Astrocyte of the cerebellum (primary cell): ENCODE measurements at regions of chr14 and their contacts with region 1.

Region 1: DNA sequence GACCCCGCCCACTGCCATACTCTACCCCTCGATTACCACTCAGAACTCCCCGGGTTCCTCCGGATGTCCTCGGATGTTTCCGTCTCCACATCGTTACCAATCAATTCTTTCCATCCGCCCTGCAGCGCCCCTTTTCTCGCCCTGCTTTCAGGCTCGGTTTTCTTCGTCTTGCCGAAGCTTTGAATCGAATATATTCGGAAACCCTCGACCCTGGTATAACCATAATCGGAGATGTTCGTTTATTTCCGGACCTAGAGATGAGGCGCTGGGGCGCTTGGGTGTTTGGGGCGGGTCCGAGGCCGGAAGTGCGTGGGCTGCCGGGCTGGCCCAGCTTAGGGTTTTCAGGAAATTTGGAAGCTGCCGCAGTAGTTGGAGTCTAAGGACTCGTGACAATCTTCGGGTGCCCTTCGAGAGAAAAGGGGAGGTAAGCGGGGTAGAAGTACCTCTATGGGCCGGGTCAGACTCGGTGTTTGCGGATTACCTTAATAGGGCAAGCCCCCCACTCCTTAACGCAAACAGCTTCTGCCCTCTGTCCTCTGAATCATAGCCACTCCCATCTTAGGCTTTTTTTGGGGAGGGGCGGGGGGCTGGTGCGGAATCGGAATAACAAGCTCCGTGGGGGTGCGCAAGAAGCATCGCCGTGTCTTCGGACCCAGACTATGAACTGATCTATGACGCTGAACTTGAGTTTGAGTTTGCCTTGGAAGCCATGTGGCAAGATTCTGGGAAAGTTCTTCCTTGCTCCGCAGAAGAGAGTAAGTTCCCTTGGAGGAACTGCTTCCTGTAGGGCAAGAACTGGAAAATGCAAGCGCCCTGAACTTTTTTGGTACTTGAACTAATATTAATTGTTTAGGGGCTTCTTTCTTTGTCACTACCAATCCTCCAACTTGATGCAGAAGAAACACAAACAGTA is at the start of gene C14orf119:
- DNase-seq: peak; percentile 99
- H3K4me3 ChIP-seq: peak within 1 kb of the TSS; percentile 92
- CTCF ChIP-seq: no peak

Region 2: DNA sequence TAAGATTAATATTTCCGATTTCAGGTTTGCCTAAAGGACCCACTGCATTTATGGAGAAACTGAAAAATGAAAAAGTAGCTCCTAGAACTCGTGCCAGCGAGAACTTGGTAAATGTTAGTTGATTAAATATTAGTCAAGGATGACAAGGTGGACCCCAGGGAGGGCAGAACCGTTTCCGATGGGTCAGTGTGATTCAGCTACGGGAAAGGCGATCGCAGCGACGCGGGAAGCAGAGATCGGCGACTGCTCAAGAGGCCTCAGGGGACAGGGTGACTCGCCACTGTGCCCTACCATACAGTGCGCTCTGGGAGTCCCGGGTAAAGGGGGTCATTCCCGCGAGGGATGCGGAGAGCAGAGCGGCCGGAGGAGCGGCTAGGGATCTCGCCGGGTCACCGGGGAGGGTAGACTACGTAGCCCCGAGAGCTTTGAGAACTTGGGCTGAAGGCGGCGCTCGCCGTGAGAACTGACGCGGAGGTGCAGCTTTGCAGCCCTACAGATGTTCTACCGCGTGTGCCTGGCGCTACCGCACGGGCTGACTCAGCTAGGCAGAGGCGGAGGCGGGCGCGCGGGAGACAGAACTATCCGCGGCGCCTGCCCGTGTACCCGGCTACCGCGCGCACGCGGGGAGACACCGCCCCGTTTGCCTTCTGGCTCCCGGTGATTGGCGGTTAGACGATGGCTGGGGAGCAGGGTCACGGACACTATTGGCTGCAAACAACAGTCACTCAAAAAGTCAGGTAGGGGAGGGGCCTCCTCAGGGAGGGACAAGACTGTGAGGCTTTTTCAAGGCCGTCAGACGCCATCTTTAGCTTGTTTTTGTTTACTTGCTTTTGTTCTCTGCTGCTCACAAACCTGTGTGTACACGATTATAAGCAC is 88.7 kb before region 1 on chr14:
- in situ Hi-C with region 1: loop called (anchors 10 kb)
- DNase-seq: peak; percentile 96
- H3K4me3 ChIP-seq: peak overlapping the region; percentile 68
- CTCF ChIP-seq: peak; percentile 32

Region 3: GRCh38 chr14:23186913-23187654 is 91.6 kb after region 1 on chr14:
- in situ Hi-C with region 1: loop called (anchors 5 kb)
- DNase-seq: peak; percentile 64
- H3K4me3 ChIP-seq: no peak overlapping the region
- CTCF ChIP-seq: peak; percentile 81

Region 4: DNA sequence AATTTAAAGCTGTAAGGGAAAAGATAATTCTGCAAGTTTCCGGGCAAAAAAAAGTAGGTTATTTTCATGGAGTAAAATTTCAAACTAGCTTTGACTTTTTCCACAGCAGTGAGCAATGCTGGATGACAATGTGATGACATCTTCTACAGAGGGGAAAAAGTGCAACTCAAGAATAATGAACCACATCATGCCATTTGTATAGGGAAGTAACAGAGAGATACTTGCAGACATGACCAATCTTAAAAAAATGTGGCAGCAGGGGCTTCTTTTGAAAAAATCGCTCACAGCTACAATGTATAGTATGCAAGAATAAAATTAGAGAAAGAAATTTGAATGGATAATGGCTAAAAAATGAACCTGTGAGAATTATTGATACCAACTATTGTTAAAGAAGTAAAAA is 656.2 kb after region 1 on chr14:
- in situ Hi-C with region 1: no loop called
- DNase-seq: no peak
- H3K4me3 ChIP-seq: no peak overlapping the region
- CTCF ChIP-seq: no peak